Activated naive CD4-positive, alpha-beta T cell treated with anti-CD3 and anti-CD28 coated beads for 36 hours (primary cell): ENCODE measurements at regions of chr7 and their contacts with region 1.

Region 1: DNA sequence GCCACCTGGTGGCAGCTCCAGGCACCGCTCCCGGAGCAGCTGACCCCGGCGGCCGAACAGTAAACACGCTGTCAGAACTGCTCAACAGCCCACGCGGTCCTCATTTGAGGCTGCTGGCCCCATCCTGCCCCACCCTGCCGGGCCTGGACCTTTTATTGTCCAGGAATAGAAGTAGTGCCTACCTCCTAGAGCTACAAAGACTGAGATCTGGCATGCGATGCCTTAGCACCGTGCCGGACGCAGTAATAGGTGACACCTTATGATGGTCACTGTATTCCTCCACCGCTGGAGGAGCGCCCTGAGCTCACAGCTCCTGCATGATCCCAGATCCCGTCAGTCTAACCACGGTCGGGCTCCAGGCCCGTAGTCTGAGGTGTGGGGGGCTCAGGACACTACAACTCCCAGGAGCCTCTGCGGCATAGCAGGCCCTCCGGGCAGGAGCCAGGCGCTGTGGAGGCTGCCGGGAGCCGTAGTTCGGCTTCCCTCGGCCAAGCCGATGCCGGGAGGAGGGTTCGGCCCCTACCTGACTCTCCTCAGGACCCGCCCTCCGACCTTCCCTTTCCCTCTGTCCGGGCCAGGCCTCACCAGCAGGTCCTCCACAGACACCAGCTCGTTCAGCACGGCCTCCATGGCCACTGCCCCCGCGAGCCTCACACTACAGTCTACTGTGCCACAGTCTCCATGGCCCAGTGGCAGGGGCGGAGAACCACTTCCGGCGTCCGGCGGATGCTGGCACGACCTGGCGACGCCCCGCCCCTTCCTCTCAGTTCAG is at the start of gene FIS1:
- DNase-seq: peak; percentile 94
- H3K4me3 Mint-ChIP-seq: peak within 1 kb of the TSS; percentile 99
- H3K27ac Mint-ChIP-seq: peak within 1 kb of the TSS; percentile 96
- H3K4me1 Mint-ChIP-seq: peaks cover 37% of the 10 kb centered on the region
- H3K27me3 Mint-ChIP-seq: no peaks in the 10 kb centered on the region
- total RNA-seq, gene FIS1: 84.2 to 84.3 TPM

Region 2: GRCh38 chr7:101085162-101085987 is 159.2 kb before region 1 on chr7 and contains the start of gene TRIM56:
- CTCF ChIA-PET with region 1: no interaction called
- intact Hi-C with region 1: loop called (anchors 1 kb)
- DNase-seq: peak; percentile 85
- H3K4me3 Mint-ChIP-seq: peak within 1 kb of the TSS; percentile 99
- H3K27ac Mint-ChIP-seq: peak within 1 kb of the TSS; percentile 99
- H3K4me1 Mint-ChIP-seq: peaks cover 33% of the 10 kb centered on the region
- H3K27me3 Mint-ChIP-seq: no peaks in the 10 kb centered on the region
- total RNA-seq, gene TRIM56: 41.4 to 41.7 TPM

Region 3: DNA sequence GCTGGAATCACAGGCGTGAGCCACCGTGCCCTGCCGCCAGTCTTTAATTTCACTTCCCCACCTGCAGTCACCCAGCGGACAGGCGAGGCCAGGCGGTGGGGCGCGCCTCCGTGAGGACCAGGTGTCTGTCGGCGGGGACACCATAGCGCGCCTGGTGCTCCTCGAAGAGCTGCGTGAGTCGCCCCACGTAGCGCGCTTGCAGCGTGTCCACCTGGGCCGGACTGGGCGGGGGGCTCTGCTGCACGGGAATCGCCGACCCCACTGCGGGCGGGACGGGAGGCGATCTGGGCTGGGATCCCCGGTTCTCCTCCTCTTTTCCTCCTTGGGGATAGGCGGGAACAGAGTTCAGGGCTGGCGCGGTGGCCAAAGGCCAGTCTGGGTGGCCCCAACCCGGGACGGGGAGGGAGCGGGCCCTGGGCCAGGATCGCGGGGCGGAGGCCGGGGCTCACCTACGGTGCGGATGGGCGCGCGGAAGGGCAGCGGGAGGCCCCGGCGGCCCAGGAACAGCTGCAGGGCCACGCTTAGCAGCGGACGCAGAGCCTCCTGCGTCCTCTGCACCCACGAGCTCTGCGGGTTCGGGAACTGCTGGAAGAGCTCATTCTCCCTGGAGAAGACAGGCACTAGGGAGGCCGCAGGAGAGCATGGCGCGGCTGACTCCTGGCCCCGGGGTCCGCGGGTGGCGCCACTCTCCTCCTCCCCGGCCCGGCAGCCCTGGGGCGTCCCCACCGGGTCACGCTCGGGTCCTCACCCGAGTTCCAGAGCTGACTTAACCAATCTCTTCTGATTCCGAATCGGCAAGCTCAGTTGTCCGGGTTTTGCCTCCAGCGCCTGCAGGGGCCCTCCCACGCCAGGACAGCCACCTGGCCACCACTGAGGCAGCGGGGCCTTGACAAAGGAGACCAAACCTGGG is 42.6 kb before region 1 on chr7:
- CTCF ChIA-PET with region 1: no interaction called
- intact Hi-C with region 1: loop called (anchors 5 kb)
- DNase-seq: no peak
- H3K4me3 Mint-ChIP-seq: no peak overlapping the region
- H3K27ac Mint-ChIP-seq: no peak overlapping the region
- H3K4me1 Mint-ChIP-seq: peaks cover 14% of the 10 kb centered on the region
- H3K27me3 Mint-ChIP-seq: peaks cover 21% of the 10 kb centered on the region

Region 4: GRCh38 chr7:101217388-101218235 is 26.9 kb before region 1 on chr7 and contains the starts of genes PLOD3 and ZNHIT1:
- CTCF ChIA-PET with region 1: interaction called, 18 read pairs
- intact Hi-C with region 1: loop called (anchors 1 kb)
- DNase-seq: peak; percentile 98
- H3K4me3 Mint-ChIP-seq: peak within 1 kb of the TSS; percentile 89
- H3K27ac Mint-ChIP-seq: peak within 1 kb of the TSS; percentile 73
- H3K4me1 Mint-ChIP-seq: peaks cover 35% of the 10 kb centered on the region
- H3K27me3 Mint-ChIP-seq: no peaks in the 10 kb centered on the region
- total RNA-seq, gene PLOD3: 18.8 to 19.7 TPM
- total RNA-seq, gene ZNHIT1: 31.7 to 35.3 TPM

Region 5: DNA sequence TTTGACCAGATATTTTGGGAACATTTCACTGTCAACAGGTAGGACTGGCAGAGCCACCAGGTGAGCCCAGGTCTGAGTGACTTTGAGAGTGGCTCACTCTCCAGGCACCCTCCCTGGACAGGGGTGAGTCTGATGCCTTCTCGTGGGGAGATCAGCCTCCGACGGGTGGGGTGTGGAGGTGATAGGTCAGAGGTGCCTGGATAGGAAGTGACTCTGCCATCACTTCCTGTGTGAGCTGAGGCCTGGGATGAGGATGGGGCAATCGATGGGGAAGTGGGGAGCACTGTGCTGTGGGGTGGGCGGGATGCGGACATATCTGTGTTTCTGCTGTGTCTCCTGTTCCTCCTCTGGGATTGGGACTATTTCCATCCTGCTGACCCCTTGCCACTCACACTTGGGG is 42.5 kb after region 1 on chr7:
- CTCF ChIA-PET with region 1: interaction called, 13 read pairs
- intact Hi-C with region 1: loop called (anchors 2 kb)
- DNase-seq: no peak
- H3K4me3 Mint-ChIP-seq: no peak overlapping the region
- H3K27ac Mint-ChIP-seq: no peak overlapping the region
- H3K4me1 Mint-ChIP-seq: peaks cover 6% of the 10 kb centered on the region
- H3K27me3 Mint-ChIP-seq: peaks cover 5% of the 10 kb centered on the region